K562 (cell line): ENCODE measurements at regions of chr19 and their contacts with region 1.

Region 1: DNA sequence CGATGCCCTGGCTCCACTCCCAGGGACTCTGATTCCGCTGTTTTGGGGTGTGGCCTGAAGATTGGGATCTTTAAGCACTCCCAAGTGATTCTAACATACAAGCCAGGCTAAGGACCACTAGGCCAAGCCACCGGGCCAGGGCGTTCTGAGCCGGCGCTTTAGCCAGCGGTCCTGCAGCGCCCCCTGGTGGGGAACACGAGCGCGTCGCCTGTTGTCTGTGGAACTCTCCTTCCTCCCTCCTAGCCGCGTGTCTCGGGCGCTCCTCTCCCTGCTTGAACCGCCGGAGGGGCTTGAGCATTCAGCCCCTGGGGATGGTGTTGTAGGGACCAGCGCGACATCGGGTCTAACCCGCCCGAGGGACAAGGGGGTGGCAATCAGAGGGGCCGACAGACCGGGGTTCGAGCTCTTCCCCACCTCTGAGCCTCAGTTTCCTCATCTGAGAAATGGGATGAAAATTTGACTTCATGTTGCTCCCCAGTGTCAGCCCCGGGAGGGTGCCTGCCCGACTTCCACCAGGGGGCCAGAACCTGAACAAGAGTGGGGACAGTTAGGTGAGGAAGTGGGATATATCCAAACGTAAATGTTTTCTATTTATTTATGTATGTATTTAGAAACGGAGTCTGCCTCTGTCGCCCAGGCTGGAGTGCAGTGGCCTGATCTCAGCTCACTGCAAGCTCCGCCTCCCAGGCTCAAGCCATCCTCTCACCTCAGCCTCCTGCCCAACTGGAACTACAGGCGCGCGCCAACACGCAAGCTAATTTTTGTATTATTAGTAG is 18.0 kb upstream of the PNMA8B start:
- DNase-seq: peak; percentile 83 to 91 (median 88)
- ATAC-seq: peak; percentile 97
- H3K4me3 ChIP-seq: no peak overlapping the region
- H3K27ac ChIP-seq: no peak overlapping the region
- H3K4me1 ChIP-seq: peaks cover 0 to 8% of the 10 kb centered on the region in 2 experiments; a peak in 3 of 5 replicates
- H3K27me3 ChIP-seq: peaks cover 2 to 8% of the 10 kb centered on the region in 2 experiments; a peak in 1 of 5 replicates
- CTCF ChIP-seq: peak; percentile 95 to 97 (median 95)
- EP300 ChIP-seq: no peak
- POLR2A ChIP-seq: no peak
- RAD21 ChIP-seq: peak; percentile 89 to 96

Region 2: DNA sequence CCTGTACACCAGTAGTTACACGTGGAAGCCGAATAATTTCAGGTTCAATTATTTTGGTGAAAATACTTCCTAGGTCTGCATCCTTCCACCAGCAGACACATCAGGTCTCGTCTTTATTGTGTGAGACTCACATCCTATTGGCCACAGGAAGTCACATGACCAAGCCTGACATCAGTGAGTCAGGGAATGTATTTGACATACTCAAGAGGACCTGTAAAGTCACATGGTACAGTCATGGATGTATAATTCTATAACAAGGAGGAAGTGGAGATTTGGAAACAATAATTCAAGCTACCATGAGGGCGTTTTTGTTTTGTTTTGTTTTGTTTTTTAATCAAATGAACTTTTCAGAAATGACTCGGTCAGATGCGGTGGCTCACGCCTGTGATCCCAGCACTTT is 226.1 kb before region 1 on chr19:
- CTCF ChIA-PET with region 1: interaction called, 12 read pairs
- POLR2A ChIA-PET with region 1: no interaction called
- in situ Hi-C with region 1: loop called (anchors 5 kb)
- intact Hi-C with region 1: no loop called
- DNase-seq: peak in 3 of 4 experiments; percentile 27 to 48 (median 41)
- ATAC-seq: peak; percentile 67
- H3K4me3 ChIP-seq: no peak overlapping the region
- H3K27ac ChIP-seq: no peak overlapping the region
- H3K4me1 ChIP-seq: no peaks in the 10 kb centered on the region
- H3K27me3 ChIP-seq: peaks cover 5 to 21% of the 10 kb centered on the region in 2 experiments; a peak in 4 of 5 replicates
- CTCF ChIP-seq: no peak
- EP300 ChIP-seq: no peak
- POLR2A ChIP-seq: no peak
- RAD21 ChIP-seq: no peak

Region 3: GRCh38 chr19:46392243-46392801 is 121.3 kb before region 1 on chr19:
- CTCF ChIA-PET with region 1: interaction called, 115 read pairs
- POLR2A ChIA-PET with region 1: interaction called, 3 read pairs
- in situ Hi-C with region 1: no loop called
- intact Hi-C with region 1: loop called (anchors 1 kb)
- DNase-seq: no peak
- ATAC-seq: no peak; the same call in 2 of the 3 replicates
- H3K4me3 ChIP-seq: no peak overlapping the region
- H3K27ac ChIP-seq: no peak overlapping the region
- H3K4me1 ChIP-seq: peaks cover 0 to 23% of the 10 kb centered on the region in 2 experiments; a peak in 2 of 5 replicates
- H3K27me3 ChIP-seq: peaks cover 0 to 2% of the 10 kb centered on the region in 2 experiments; a peak in 2 of 5 replicates
- CTCF ChIP-seq: no peak
- EP300 ChIP-seq: no peak
- POLR2A ChIP-seq: no peak
- RAD21 ChIP-seq: no peak

Region 4: GRCh38 chr19:46487802-46488445 is 25.7 kb before region 1 on chr19:
- CTCF ChIA-PET with region 1: interaction called, 37 read pairs
- POLR2A ChIA-PET with region 1: interaction called, 3 read pairs
- in situ Hi-C with region 1: no loop called
- intact Hi-C with region 1: loop called (anchors 2 kb)
- DNase-seq: peak; percentile 74 to 80 (median 77)
- ATAC-seq: peak; percentile 89
- H3K4me3 ChIP-seq: no peak overlapping the region
- H3K27ac ChIP-seq: no peak overlapping the region
- H3K4me1 ChIP-seq: peaks cover 0 to 22% of the 10 kb centered on the region in 2 experiments; a peak in 4 of 5 replicates
- H3K27me3 ChIP-seq: peaks cover 51 to 80% of the 10 kb centered on the region in 2 experiments
- CTCF ChIP-seq: peak; percentile 94 to 97 (median 95)
- EP300 ChIP-seq: no peak
- POLR2A ChIP-seq: no peak
- RAD21 ChIP-seq: peak; percentile 96 to 99

Region 5: GRCh38 chr19:46499692-46500091 is 14.0 kb before region 1 on chr19:
- CTCF ChIA-PET with region 1: no interaction called
- POLR2A ChIA-PET with region 1: no interaction called
- in situ Hi-C with region 1: no loop called
- intact Hi-C with region 1: no loop called
- DNase-seq: no peak
- ATAC-seq: no peak
- H3K4me3 ChIP-seq: no peak overlapping the region
- H3K27ac ChIP-seq: no peak overlapping the region
- H3K4me1 ChIP-seq: peaks cover 0 to 13% of the 10 kb centered on the region in 2 experiments; a peak in 2 of 5 replicates
- H3K27me3 ChIP-seq: peaks cover 27 to 69% of the 10 kb centered on the region in 2 experiments
- CTCF ChIP-seq: no peak
- EP300 ChIP-seq: no peak
- POLR2A ChIP-seq: no peak
- RAD21 ChIP-seq: no peak

Region 6: GRCh38 chr19:46542428-46543230 is 29.0 kb after region 1 on chr19:
- CTCF ChIA-PET with region 1: interaction called, 10 read pairs
- POLR2A ChIA-PET with region 1: no interaction called
- in situ Hi-C with region 1: no loop called
- intact Hi-C with region 1: loop called (anchors 1 kb)
- DNase-seq: peak; percentile 74 to 91 (median 75)
- ATAC-seq: peak; percentile 92
- H3K4me3 ChIP-seq: no peak overlapping the region
- H3K27ac ChIP-seq: no peak overlapping the region
- H3K4me1 ChIP-seq: no peaks in the 10 kb centered on the region; a peak in 2 of 5 replicates
- H3K27me3 ChIP-seq: peaks cover 7 to 8% of the 10 kb centered on the region in 2 experiments; a peak in 4 of 5 replicates
- CTCF ChIP-seq: peak; percentile 84 to 96 (median 86)
- EP300 ChIP-seq: no peak
- POLR2A ChIP-seq: no peak
- RAD21 ChIP-seq: peak; percentile 68 to 85

Region 7: DNA sequence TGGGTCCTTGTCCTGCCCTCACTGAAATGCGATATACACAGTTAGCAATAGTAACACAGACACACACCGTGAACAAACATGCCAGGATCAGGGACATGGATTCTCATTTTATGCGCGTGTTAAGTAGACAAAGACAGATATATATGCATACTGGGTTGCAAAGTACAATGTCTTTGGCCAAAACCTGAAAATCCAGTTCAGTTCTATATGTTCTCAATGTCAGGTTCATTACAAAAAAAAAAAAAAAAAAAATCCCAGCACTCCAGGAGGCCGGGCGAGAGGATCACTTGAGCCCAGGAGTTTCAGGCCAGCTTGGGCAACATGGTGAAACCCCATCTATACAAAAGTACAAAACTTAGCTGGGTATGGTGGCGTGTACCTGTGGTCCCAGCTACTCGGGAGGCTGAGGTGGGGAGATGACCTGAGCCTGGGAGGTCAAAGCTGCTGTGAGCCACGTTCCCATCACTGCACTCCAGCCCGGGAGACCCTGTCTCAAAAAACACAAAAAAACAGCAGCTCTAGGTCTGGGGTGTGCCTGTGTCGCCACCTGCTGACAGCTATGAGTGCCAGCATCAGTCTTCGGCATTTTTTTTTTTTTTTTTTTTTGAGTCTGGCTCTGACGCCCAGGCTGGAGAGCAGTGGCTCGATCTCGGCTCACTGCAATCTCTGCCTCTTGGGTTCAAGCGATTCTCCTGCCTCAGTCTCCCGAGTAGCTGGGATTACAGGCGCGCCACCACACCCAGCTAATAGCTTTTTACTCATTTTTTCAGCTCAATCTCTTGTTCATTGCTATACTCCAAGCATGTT is 326.7 kb after region 1 on chr19:
- CTCF ChIA-PET with region 1: no interaction called
- POLR2A ChIA-PET with region 1: no interaction called
- in situ Hi-C with region 1: no loop called
- intact Hi-C with region 1: no loop called
- DNase-seq: peak; percentile 60 to 78 (median 66)
- ATAC-seq: peak; percentile 71
- H3K4me3 ChIP-seq: no peak overlapping the region
- H3K27ac ChIP-seq: no peak overlapping the region
- H3K4me1 ChIP-seq: peaks cover 33 to 37% of the 10 kb centered on the region in 2 experiments
- H3K27me3 ChIP-seq: no peaks in the 10 kb centered on the region
- CTCF ChIP-seq: peak; percentile 86 to 92 (median 86)
- EP300 ChIP-seq: no peak
- POLR2A ChIP-seq: no peak
- RAD21 ChIP-seq: peak; percentile 74 to 75